ENCODE measurements at regions of chr9 and their contacts with region 1.

Region 1: GRCh38 chr9:130780865-130781504 is 54.1 kb upstream of the ABL1 start:
- DNase-seq: no peak
- ATAC-seq: peak; percentile 89

Region 2: DNA sequence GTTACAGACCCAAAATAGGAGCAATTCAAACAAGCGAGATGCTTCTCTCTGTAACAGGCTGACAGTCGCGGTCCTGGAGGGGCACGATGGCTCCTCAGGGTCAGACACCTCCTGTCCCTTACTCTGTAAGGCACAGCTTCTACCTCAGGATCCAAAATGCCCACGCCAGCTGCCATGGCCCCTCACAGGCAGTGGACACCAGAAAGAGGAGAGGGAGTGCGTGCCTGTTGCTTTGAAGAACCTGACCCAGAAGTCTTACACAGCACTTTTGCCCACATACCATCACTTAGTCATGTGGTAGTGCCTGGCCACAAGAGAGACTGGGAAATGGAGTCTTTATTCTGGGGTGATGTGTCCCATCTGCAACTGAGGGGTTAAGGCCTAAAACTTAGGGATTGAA is 42.5 kb after region 1 on chr9:
- intact Hi-C with region 1: no loop called
- DNase-seq: no peak
- ATAC-seq: no peak

Region 3: GRCh38 chr9:130834371-130835311 is 53.7 kb after region 1 on chr9 and contains the start of gene ABL1:
- intact Hi-C with region 1: loop called (anchors 1 kb)
- DNase-seq: peak; percentile 81
- ATAC-seq: peak; percentile 89
- total RNA-seq, gene ABL1: 33.0 TPM

Region 4: GRCh38 chr9:130847327-130848217 is 66.6 kb after region 1 on chr9:
- intact Hi-C with region 1: loop called (anchors 5 kb)
- DNase-seq: peak; percentile 73
- ATAC-seq: peak; percentile 91